Heart left ventricle (tissue), 16 donors: ENCODE measurements at regions of chr1 and their contacts with region 1.

Region 1: GRCh38 chr1:33094971-33095604 is 14.1 kb downstream of the AZIN2 start:
- DNase-seq: peak in 2 of 5 donors; percentile 43 to 45
- ATAC-seq: peak in 1 of 4 donors; percentile 34
- H3K4me3 ChIP-seq: no peak overlapping the region
- H3K27ac ChIP-seq: no peak overlapping the region
- H3K4me1 ChIP-seq: peaks cover 0 to 45% (median 6%) of the 10 kb centered on the region in 12 donors
- H3K27me3 ChIP-seq: no peaks in the 10 kb centered on the region
- CTCF ChIP-seq: peak; percentile 93 to 99 (median 98)
- POLR2A ChIP-seq: no peak

Region 2: DNA sequence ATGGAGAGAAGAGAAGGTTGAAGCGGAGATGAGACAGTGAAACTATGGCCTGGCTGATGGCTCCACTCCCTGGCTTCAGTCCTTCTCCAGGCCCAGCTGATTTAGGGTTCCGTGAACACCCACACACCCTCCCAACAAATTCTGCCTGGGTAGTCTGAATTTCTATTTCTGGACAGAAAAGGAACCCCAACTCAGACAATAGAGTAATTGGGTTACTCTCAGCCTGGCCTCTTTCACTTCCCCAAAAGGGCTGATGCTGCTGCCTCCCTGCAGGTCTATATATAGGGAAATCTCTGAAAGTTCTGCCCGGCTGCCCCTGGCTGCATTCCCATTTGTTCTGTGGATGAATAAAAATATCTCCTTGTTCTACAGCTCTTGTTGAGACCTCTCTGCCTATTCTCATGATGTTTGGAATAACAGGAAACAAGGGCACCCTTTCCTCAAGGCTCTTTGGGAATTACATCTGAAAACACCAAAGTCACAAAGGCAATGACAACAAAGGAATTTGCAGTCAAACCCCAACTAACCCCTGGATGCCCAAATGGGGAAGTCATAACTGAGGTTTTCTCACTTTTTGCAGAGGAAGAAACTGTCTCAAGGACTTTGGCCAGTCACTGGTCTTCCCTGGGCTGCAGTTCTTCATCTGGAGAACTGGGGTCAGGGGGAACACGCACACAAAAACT is 366.0 kb after region 1 on chr1:
- intact Hi-C with region 1: loop called in 2 of 10 experiments (anchors 10 kb)
- DNase-seq: peak in 4 of 5 donors; percentile 63 to 80 (median 74)
- ATAC-seq: peak; percentile 75 to 81 (median 78)
- H3K4me3 ChIP-seq: peak overlapping the region in 2 of 12 donors; percentile 23 to 25
- H3K27ac ChIP-seq: peak overlapping the region; percentile 68 to 95 (median 86)
- H3K4me1 ChIP-seq: peaks cover 0 to 68% (median 33%) of the 10 kb centered on the region in 12 donors
- H3K27me3 ChIP-seq: no peaks in the 10 kb centered on the region
- CTCF ChIP-seq: no peak
- POLR2A ChIP-seq: no peak